Endothelial cell of umbilical vein (primary cell): ENCODE measurements at regions of chr15 and their contacts with region 1.

Region 1: DNA sequence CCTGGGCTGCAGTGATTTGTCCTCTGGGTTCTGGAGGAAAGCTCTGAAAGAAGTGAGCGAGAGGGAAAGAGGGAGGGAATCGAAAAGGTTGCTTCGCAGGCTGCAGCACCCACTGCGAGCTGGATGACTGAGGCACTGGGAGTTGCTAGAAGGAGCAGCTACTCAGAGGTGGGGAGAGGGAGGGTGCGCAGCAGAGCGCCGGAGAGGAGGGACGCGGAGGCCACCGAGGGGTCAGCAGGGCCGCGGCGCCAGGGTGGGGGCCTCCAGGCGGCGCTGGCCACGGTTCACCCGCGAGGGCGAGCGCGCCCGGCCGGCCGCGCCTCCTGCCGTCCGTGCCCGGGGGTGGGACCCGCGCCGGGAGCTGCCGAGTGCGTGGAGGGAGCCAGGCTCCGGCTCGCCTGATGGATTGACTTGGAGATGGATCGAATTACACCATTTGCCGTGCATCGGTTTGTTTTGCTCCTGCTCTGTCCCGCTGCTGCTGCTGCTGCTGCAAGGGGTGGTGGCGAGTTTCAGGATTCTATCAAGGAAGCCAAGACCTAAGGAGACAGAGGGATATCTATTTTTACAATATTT is at the start of gene SEMA6D:
- DNase-seq: peak; percentile 87
- H3K4me3 ChIP-seq: peak within 1 kb of the TSS; percentile 64 to 90 (median 85)
- H3K27ac ChIP-seq: peak within 1 kb of the TSS; percentile 58
- H3K4me1 ChIP-seq: peaks cover 19% of the 10 kb centered on the region
- H3K27me3 ChIP-seq: no peaks in the 10 kb centered on the region
- CTCF ChIP-seq: peak; percentile 36 to 47
- POLR2A ChIP-seq: peak; percentile 19
- total RNA-seq, gene SEMA6D: 22.5 and 26.7 TPM in 2 replicates

Region 2: DNA sequence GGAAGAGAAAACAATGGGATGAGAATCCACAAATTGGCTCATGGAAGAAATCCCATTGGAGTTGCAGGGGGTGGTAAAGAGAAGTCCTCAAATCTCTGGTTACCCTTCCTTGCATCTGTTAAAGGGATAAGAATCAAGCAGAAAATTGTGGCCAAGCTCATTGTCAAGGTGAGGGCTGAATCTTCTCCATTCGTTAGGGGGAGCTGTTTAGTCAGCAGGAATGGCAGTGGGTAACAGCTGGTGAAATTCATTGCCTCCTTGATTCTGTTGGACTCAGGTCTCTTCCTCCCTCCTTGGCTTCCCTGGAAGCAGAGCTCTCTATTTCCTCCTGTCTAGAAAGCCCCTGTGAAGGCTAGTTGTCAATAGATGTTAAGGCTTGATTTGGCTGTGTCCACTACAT is 342.9 kb before region 1 on chr15:
- CTCF ChIA-PET with region 1: interaction called, 21 read pairs
- POLR2A ChIA-PET with region 1: no interaction called
- dilution Hi-C with region 1: no loop called
- intact Hi-C with region 1: loop called (anchors 2 kb)
- DNase-seq: peak; percentile 52
- H3K4me3 ChIP-seq: no peak overlapping the region
- H3K27ac ChIP-seq: no peak overlapping the region
- H3K4me1 ChIP-seq: no peaks in the 10 kb centered on the region
- H3K27me3 ChIP-seq: no peaks in the 10 kb centered on the region
- CTCF ChIP-seq: peak; percentile 36 to 49
- POLR2A ChIP-seq: no peak

Region 3: GRCh38 chr15:47473832-47474231 is 243.3 kb before region 1 on chr15:
- CTCF ChIA-PET with region 1: interaction called, 31 read pairs
- POLR2A ChIA-PET with region 1: no interaction called
- dilution Hi-C with region 1: no loop called
- intact Hi-C with region 1: loop called (anchors 1 kb)
- DNase-seq: peak; percentile 91
- H3K4me3 ChIP-seq: no peak overlapping the region
- H3K27ac ChIP-seq: no peak overlapping the region
- H3K4me1 ChIP-seq: peaks cover 10% of the 10 kb centered on the region
- H3K27me3 ChIP-seq: no peaks in the 10 kb centered on the region
- CTCF ChIP-seq: no peak
- POLR2A ChIP-seq: no peak

Region 4: GRCh38 chr15:47663101-47663500 is 54.0 kb before region 1 on chr15:
- CTCF ChIA-PET with region 1: interaction called, 12 read pairs
- POLR2A ChIA-PET with region 1: no interaction called
- dilution Hi-C with region 1: no loop called
- intact Hi-C with region 1: loop called (anchors 1 kb)
- DNase-seq: peak; percentile 21
- H3K4me3 ChIP-seq: no peak overlapping the region
- H3K27ac ChIP-seq: no peak overlapping the region
- H3K4me1 ChIP-seq: peaks cover 28% of the 10 kb centered on the region
- H3K27me3 ChIP-seq: no peaks in the 10 kb centered on the region
- CTCF ChIP-seq: no peak
- POLR2A ChIP-seq: no peak

Region 5: GRCh38 chr15:47756872-47757271 is 39.7 kb after region 1 on chr15:
- CTCF ChIA-PET with region 1: interaction called, 11 read pairs
- POLR2A ChIA-PET with region 1: interaction called, 3 read pairs
- dilution Hi-C with region 1: no loop called
- intact Hi-C with region 1: loop called (anchors 1 kb)
- DNase-seq: peak; percentile 70
- H3K4me3 ChIP-seq: no peak overlapping the region
- H3K27ac ChIP-seq: peak overlapping the region; percentile 6
- H3K4me1 ChIP-seq: peaks cover 9% of the 10 kb centered on the region
- H3K27me3 ChIP-seq: no peaks in the 10 kb centered on the region
- CTCF ChIP-seq: no peak
- POLR2A ChIP-seq: no peak

Region 6: DNA sequence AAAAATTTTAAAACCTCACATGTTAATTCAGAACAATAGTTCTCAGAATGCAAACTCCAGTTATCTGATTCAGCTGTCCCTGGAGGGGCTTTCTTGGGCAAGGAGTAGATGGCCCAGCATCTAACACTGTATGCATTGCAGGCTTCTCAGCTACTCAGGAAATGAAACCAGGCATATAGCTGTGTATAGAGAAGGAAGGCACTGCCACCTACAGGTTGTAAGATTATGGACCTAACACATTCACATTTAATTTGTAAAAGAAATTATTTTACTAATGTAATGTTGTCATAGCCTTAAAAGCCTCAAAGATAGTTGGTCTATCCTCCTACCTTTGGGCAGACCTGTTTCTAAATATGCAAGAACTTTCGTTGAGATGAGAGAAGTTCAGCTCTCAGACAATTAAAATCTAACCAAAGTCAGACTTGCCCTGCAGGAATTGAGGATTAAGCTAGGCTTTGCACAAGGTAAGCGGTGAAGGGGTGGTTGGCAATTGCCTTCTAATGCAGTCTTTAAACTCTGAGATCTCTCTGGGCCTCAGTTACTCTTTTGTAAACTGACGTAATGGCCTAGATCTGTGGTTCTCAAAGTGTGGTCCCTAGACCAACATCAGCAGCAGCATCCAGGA is 270.9 kb after region 1 on chr15:
- CTCF ChIA-PET with region 1: interaction called, 29 read pairs
- POLR2A ChIA-PET with region 1: no interaction called
- dilution Hi-C with region 1: no loop called
- intact Hi-C with region 1: loop called (anchors 1 kb)
- DNase-seq: peak; percentile 68
- H3K4me3 ChIP-seq: no peak overlapping the region
- H3K27ac ChIP-seq: no peak overlapping the region
- H3K4me1 ChIP-seq: no peaks in the 10 kb centered on the region
- H3K27me3 ChIP-seq: no peaks in the 10 kb centered on the region
- CTCF ChIP-seq: peak; percentile 40 to 47
- POLR2A ChIP-seq: no peak

Region 7: GRCh38 chr15:48250640-48251076 is 533.5 kb after region 1 on chr15:
- CTCF ChIA-PET with region 1: no interaction called
- POLR2A ChIA-PET with region 1: no interaction called
- dilution Hi-C with region 1: no loop called
- intact Hi-C with region 1: loop called (anchors 5 kb)
- DNase-seq: peak; percentile 71
- H3K4me3 ChIP-seq: no peak overlapping the region
- H3K27ac ChIP-seq: no peak overlapping the region
- H3K4me1 ChIP-seq: no peaks in the 10 kb centered on the region
- H3K27me3 ChIP-seq: no peaks in the 10 kb centered on the region
- CTCF ChIP-seq: peak; percentile 57 to 61
- POLR2A ChIP-seq: no peak